Heart left ventricle (tissue), 16 donors: ENCODE measurements at regions of chr3 and their contacts with region 1.

Region 1: DNA sequence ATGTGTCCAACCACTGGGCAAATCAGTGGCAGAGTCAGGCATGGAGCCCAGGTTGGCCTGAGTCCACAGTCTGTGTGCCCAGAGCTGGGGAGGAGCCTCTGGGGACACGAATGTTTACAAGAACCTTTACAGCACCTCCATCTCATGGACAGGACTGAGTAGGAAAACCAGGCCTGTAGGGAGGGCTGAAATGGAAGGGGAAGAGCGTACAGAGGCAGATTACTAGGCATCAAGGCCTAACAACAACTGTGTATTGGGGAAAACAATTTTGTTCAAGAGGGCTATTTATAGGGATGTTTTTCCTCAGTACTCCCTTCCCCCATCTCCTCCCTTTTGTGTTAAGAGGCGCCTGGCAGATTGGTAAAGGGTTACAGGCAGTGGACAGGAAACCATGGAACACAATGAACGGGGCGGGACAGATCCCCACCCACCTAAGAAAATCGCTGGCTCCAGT is 15.1 kb upstream of the ARHGAP31 start:
- DNase-seq: peak; percentile 59 to 84 (median 82)
- ATAC-seq: peak; percentile 88 to 94 (median 90)
- H3K4me3 ChIP-seq: peak overlapping the region in 4 of 12 donors; percentile 7 to 21 (median 17)
- H3K27ac ChIP-seq: peak overlapping the region; percentile 59 to 91 (median 82)
- H3K4me1 ChIP-seq: peaks cover 0 to 49% (median 20%) of the 10 kb centered on the region in 12 donors
- H3K27me3 ChIP-seq: no peaks in the 10 kb centered on the region
- CTCF ChIP-seq: no peak
- POLR2A ChIP-seq: no peak

Region 2: GRCh38 chr3:119219069-119219468 is 60.1 kb before region 1 on chr3:
- intact Hi-C with region 1: no loop called
- DNase-seq: no peak
- ATAC-seq: no peak
- H3K4me3 ChIP-seq: no peak overlapping the region
- H3K27ac ChIP-seq: no peak overlapping the region
- H3K4me1 ChIP-seq: no peaks in the 10 kb centered on the region
- H3K27me3 ChIP-seq: no peaks in the 10 kb centered on the region
- CTCF ChIP-seq: no peak
- POLR2A ChIP-seq: no peak

Region 3: DNA sequence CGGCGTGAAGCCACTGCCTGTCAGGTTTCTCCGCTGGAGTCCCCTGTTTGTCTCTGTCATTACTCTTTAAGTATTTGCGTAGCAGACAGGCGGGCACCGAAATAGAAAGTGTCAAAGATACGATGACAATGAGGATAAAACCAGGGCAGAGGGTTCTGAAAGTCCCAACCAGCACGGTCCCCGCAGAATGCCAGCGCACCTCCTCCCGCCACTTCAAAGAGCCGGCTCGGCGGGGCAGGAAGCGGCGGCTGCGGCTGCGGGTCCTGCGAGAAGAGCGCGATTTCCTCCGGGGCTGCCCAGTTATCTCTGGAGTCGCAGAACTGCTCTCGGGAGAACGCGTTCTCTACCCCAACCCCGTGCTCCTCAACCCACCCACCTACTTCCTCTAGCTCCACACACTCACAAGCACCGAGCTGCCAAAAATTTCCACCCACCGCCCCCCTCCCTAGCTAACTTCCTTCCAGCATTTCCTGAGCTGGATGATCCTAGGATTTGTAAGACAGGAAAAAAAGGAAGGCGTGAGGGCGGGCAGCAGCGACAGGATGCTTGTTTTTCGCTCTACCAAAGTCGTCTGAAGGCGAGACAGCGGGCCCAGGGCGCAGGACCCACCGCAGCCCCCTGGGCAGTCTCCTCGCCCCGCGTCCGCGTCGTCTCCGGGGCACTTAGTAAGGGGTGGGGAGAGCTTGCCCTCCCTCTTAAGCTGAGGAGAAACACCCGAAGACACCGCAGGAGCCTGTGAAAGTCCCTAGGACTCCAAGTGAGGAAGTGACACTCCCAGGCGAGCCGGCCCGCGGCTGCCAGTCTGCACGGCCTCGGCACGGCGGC is 15.0 kb after region 1 on chr3 and contains the start of gene ARHGAP31:
- intact Hi-C with region 1: loop called in 4 of 10 experiments (anchors 1 kb)
- DNase-seq: peak; percentile 83 to 88 (median 86)
- ATAC-seq: peak; percentile 70 to 79 (median 76)
- H3K4me3 ChIP-seq: peak within 1 kb of the TSS; percentile 74 to 97 (median 88)
- H3K27ac ChIP-seq: peak within 1 kb of the TSS; percentile 96 to 100 (median 98)
- H3K4me1 ChIP-seq: peaks cover 3 to 55% (median 41%) of the 10 kb centered on the region in 12 donors
- H3K27me3 ChIP-seq: no peaks in the 10 kb centered on the region
- CTCF ChIP-seq: no peak
- POLR2A ChIP-seq: peak in 1 of 2 donors; percentile 70
- total RNA-seq, gene ARHGAP31: 29.8 to 79.1 (median 37.8) TPM

Region 4: DNA sequence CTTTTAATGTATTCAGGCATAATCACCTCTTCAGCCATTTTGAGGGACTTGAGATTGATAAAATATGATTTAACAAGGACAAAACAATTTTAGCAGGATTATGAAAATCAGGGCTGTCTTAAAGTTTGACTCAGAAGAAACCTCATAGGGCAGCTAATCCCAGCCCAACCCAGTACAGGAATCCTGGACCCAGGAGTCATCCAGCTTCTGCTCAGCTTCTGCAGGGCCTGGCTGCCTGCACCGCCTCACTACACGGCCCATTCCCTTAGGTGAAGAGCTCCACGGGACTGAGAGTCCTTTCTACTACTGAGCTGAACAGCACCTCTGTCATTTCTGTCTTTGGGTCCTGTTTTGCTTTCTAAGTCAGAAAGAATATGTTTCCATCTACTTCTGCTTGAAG is 52.5 kb after region 1 on chr3:
- intact Hi-C with region 1: loop called in 2 of 10 experiments (anchors 5 to 10 kb)
- DNase-seq: no peak
- ATAC-seq: peak in 2 of 4 donors; percentile 36 to 46
- H3K4me3 ChIP-seq: no peak overlapping the region
- H3K27ac ChIP-seq: peak overlapping the region in 8 of 12 donors; percentile 32 to 79 (median 52)
- H3K4me1 ChIP-seq: peaks cover 12 to 69% (median 41%) of the 10 kb centered on the region in 12 donors
- H3K27me3 ChIP-seq: no peaks in the 10 kb centered on the region
- CTCF ChIP-seq: no peak
- POLR2A ChIP-seq: no peak

Region 5: GRCh38 chr3:119359476-119360326 is 80.6 kb after region 1 on chr3:
- intact Hi-C with region 1: loop called in 7 of 10 experiments (anchors 5 kb)
- DNase-seq: no peak
- ATAC-seq: peak in 3 of 4 donors; percentile 30 to 50 (median 31)
- H3K4me3 ChIP-seq: no peak overlapping the region
- H3K27ac ChIP-seq: peak overlapping the region in 2 of 12 donors; percentile 2 to 40
- H3K4me1 ChIP-seq: peaks cover 3 to 47% (median 30%) of the 10 kb centered on the region in 12 donors
- H3K27me3 ChIP-seq: no peaks in the 10 kb centered on the region
- CTCF ChIP-seq: no peak
- POLR2A ChIP-seq: no peak

Region 6: GRCh38 chr3:119463171-119464169 is 184.3 kb after region 1 on chr3 and contains the start of gene TMEM39A:
- intact Hi-C with region 1: loop called in 5 of 10 experiments (anchors 2 to 10 kb)
- DNase-seq: peak; percentile 100
- ATAC-seq: peak; percentile 96 to 99 (median 97)
- H3K4me3 ChIP-seq: peak within 1 kb of the TSS; percentile 62 to 100 (median 88)
- H3K27ac ChIP-seq: peak within 1 kb of the TSS; percentile 76 to 95 (median 84)
- H3K4me1 ChIP-seq: peaks cover 0 to 56% (median 19%) of the 10 kb centered on the region in 12 donors
- H3K27me3 ChIP-seq: no peaks in the 10 kb centered on the region
- CTCF ChIP-seq: peak in 4 of 12 donors; percentile 14 to 37 (median 25)
- POLR2A ChIP-seq: peak; percentile 43 to 94
- total RNA-seq, gene TMEM39A: 8.7 to 21.0 (median 15.6) TPM

Region 7: GRCh38 chr3:119662604-119663373 is 383.7 kb after region 1 on chr3:
- intact Hi-C with region 1: no loop called
- DNase-seq: peak in 1 of 5 donors; percentile 30
- ATAC-seq: no peak
- H3K4me3 ChIP-seq: peak overlapping the region in 3 of 12 donors; percentile 14 to 22 (median 18)
- H3K27ac ChIP-seq: peak overlapping the region; percentile 87 to 99 (median 96)
- H3K4me1 ChIP-seq: peaks cover 0 to 70% (median 29%) of the 10 kb centered on the region in 12 donors
- H3K27me3 ChIP-seq: no peaks in the 10 kb centered on the region
- CTCF ChIP-seq: peak in 4 of 12 donors; percentile 8 to 23 (median 17)
- POLR2A ChIP-seq: peak in 1 of 2 donors; percentile 22